ENCODE measurements at regions of chr13 and their contacts with region 1.

Region 1: GRCh38 chr13:43804461-43805070 is 17.8 kb upstream of the ENOX1 start:
- DNase-seq: peak; percentile 55 to 68
- H3K4me3 ChIP-seq: no peak overlapping the region
- H3K4me1 ChIP-seq: no peaks in the 10 kb centered on the region
- H3K27me3 ChIP-seq: peaks cover 14% of the 10 kb centered on the region

Region 2: GRCh38 chr13:42969558-42970172 is 834.9 kb before region 1 on chr13:
- in situ Hi-C with region 1: loop called (anchors 25 kb)
- DNase-seq: peak; percentile 72 to 94
- H3K4me3 ChIP-seq: no peak overlapping the region
- H3K4me1 ChIP-seq: peaks cover 19% of the 10 kb centered on the region
- H3K27me3 ChIP-seq: no peaks in the 10 kb centered on the region

Region 3: GRCh38 chr13:43116242-43116641 is 688.3 kb before region 1 on chr13:
- in situ Hi-C with region 1: loop called (anchors 25 kb)
- DNase-seq: no peak
- H3K4me3 ChIP-seq: no peak overlapping the region
- H3K4me1 ChIP-seq: peaks cover 6% of the 10 kb centered on the region
- H3K27me3 ChIP-seq: peaks cover 29% of the 10 kb centered on the region

Region 4: DNA sequence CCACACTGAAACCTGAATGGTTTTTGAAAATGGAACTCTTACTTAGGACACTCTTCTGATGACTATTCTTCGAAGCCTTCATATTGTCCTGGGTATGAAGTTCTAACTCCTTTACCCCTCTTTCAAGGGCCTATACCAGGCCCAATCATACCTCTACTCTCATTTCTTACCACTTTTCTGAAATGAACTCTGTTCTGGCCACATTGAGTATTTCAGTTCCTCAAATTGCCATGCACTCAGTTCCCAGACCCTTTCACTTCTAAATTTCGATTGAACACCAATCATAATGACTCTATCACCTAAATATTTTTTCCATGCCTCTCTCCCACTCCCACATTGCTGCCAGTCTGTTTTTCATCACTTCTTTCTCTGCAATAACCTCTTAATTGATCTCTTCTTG is 128.8 kb after region 1 on chr13:
- in situ Hi-C with region 1: no loop called
- DNase-seq: no peak
- H3K4me3 ChIP-seq: no peak overlapping the region
- H3K4me1 ChIP-seq: peaks cover 7% of the 10 kb centered on the region; the same call in 1 of the 2 replicates
- H3K27me3 ChIP-seq: no peaks in the 10 kb centered on the region; the same call in 1 of the 2 replicates

Measured in HAP-1 (cell line).